ENCODE measurements at regions of chr6 and their contacts with region 1.

Region 1: GRCh38 chr6:32885698-32886286 is 31.8 kb downstream of the PSMB9 start:
- DNase-seq: no peak
- ATAC-seq: peak; percentile 78

Region 2: GRCh38 chr6:32501016-32501415 is 384.8 kb before region 1 on chr6:
- intact Hi-C with region 1: no loop called
- DNase-seq: no peak
- ATAC-seq: peak; percentile 41

Region 3: DNA sequence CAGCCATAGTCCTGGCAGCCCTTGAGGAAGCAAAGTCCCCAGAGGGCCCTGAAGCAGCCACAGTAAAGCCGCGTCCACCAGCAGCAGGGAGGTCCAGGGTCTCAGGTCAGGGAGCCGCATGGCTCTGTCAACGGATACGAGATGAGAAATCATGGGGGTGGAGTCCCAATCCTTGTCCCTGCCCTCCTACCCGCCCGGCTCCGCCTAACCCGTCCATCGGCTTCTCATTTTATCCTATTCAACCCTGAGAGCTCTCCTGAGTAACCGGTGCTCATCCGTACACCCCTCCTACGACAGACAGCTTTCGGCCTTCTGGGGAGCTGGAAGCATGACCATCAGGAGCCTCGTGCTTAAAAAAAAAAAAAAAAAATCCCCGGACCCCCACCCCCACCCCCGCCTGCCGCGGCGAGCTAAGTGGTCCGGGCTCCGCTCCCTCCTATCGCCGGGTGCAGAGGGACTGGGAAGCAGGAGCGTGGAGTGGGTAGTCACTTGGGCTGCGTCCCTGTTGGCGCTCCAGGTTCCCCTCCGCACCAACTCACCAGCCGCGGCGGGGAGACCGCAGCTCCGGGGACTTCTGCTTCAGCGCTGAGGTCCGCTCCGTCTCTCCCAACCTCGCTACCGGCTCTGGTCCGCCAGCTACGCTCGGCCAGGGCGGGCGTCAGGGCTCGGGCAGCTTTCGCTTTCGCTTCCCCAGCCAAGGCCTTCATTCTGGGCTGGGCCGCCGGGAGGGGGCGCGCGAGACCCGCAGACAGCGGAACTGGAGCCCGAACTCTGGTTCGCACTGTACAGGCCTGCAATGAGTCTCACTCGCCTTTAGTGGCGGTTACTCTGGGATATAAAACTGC is 47.5 kb before region 1 on chr6 and contains the start of gene TAP2:
- intact Hi-C with region 1: no loop called
- DNase-seq: peak; percentile 98
- ATAC-seq: peak; percentile 98
- total RNA-seq, gene TAP2: 19.3 TPM

Region 4: DNA sequence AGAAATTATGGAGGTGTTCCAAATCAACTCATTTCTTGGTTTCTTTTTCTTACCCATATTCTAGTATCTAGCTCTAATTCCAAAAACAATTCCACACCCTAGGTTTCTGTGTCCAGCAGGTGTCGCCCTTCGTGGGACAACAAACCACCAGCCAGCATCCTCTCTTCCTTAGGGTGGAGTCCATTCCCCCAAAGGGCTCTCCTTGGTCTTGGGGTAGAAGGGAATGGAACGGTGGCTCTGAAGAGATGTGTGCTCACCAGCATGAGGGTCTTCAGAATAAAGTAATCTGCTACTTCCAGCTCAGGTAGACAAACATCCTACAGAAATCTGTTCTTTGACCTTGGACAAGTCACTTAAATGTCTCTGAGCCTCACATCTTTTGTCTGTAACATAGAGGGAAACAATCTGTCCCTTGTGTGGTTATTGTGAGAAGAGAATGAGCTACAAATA is 47.9 kb after region 1 on chr6:
- intact Hi-C with region 1: loop called (anchors 5 kb)
- DNase-seq: peak; percentile 81
- ATAC-seq: peak; percentile 77

Region 5: DNA sequence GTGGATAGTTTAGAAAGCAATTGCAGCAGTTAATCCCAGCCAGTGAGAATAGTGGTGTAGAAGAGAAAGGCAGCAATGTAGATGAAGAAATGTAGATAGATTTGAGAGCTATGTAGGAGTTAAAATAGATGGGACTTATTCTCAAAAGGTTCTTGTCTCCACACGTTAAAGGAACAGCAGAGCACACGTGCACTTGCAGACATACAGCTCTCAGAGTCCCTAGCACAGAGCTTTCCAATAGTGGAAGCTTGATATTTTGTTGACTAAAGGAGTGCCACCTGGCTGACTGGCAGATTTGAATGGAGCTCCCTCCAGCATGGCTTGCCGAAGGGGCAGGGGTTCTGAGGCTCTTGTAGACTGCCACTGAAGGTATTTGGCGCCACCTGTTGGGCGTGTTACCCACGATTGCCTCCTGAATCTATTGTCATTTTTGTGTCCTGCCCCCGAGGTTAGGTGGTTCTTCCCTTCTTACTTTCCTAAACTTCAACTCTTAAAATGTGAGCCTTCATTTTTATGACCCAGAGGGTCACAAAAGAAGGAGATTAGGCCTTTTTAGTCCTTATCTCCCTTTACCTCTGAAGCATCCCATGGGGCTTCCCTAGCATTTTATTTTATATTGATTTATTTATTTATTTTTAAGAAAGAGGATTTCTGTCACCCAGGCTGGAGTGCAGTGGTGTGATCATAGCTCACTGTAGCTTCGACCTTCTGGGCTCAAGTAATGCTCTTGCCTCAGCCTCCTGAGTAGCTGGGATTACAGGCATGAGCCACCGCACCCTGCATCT is 99.0 kb after region 1 on chr6:
- intact Hi-C with region 1: loop called (anchors 5 kb)
- DNase-seq: peak; percentile 94
- ATAC-seq: peak; percentile 85